Sciatic nerve (tissue), 2 donors: ENCODE measurements at regions of chr1 and their contacts with region 1.

Region 1: DNA sequence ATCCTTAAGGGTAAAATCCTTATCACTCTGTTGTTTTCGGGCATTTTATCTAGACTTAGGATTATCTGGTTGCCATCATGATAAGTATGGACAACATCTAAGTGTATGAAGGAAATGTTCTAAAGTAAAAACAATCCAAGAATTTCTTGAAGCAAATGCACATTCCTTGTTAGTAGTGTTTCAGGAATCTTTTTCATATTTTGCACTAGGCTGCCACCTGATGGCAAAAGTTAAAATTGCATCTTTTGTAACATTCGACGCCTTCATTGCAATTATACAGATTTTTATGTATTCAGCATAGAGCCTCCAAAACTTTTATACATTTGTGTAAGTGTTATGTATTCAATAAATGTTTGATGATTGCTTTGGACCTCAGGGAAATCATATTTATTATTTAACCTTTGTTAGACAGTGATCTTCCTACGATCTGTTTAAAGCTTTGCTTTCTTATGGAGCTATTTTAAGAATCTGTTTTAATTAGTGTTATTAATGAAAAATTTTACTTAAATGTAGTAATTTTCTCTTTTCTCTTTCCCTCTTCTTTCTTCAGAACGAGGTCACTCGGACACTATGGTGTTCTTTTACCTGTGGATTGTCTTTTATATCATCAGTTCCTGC is 49.4 kb upstream of the KIAA1614 start:
- DNase-seq: no peak
- ATAC-seq: peak; percentile 32

Region 2: DNA sequence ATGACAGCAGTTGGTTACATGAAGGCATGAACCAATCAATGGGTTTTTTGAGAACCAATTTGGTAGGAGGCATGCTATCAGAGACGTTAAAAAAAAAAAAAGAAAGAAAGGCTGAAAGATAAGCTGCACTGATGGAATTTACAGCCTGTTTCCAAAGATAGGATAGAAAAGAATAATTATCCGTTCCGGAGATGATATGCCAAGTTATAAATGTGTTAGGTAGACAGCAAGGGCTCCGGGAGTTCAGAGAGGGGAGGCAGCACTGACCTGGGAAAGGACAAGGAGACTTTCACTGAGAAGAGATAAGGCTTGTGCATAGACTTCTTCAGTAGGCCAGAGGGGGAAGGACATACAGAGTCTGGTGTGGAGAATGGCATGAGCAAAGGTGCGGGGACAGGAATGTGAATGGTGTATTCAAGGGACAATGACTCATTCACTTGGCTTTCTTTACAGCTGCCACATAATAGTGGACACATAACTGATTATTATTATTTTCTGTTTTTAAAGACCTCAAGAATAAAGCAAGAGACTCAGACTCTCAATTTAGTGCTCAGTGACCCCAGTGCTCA is 336.1 kb before region 1 on chr1:
- intact Hi-C with region 1: loop called (anchors 5 kb)
- DNase-seq: no peak
- ATAC-seq: no peak

Region 3: GRCh38 chr1:180791806-180792205 is 71.5 kb before region 1 on chr1:
- intact Hi-C with region 1: no loop called
- DNase-seq: no peak
- ATAC-seq: no peak